Right cardiac atrium (tissue), 5 donors: ENCODE measurements at regions of chr7 and their contacts with region 1.

Region 1: DNA sequence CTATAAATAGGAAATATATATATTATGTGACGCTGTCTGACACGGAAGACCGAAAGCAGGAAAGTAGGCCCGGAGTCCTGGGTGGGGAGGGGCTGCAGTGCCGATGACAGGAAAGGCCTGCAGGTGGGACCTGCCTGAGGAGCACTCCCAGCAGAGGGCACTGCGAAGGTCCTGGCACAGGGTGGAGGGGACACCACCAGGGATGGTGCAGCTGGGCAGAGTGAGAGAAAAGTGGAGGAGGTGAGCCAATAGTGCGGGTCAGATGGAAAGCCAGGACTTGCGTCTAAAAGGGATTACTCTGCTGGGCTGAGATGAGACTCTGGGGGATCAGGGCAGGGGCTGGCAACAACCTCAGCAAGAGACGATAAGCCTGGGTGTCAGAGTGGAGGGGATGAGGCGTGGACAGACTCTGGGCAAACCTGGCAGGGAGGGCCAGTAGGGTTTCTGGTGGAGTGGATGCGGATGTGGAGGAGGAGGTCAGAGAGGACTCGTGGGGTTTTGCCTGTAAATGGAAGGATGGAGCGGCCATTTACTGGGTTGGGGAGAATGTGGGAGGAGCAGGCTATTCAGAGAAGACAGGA is 118.2 kb upstream of the ZNF746 start:
- DNase-seq: peak; percentile 30 to 72 (median 68)
- ATAC-seq: peak; percentile 74 to 77
- H3K4me3 ChIP-seq: no peak overlapping the region
- H3K27ac ChIP-seq: peak overlapping the region; percentile 25
- H3K4me1 ChIP-seq: peaks cover 6% of the 10 kb centered on the region
- H3K27me3 ChIP-seq: no peaks in the 10 kb centered on the region

Region 2: GRCh38 chr7:149500910-149501309 is 114.9 kb before region 1 on chr7:
- intact Hi-C with region 1: loop called in 1 of 4 experiments (anchors 10 kb)
- DNase-seq: peak in 2 of 3 donors; percentile 64 to 72
- ATAC-seq: no peak
- H3K4me3 ChIP-seq: no peak overlapping the region
- H3K27ac ChIP-seq: no peak overlapping the region
- H3K4me1 ChIP-seq: no peaks in the 10 kb centered on the region
- H3K27me3 ChIP-seq: no peaks in the 10 kb centered on the region

Region 3: GRCh38 chr7:149669121-149669818 is 53.5 kb after region 1 on chr7:
- intact Hi-C with region 1: no loop called
- DNase-seq: no peak
- ATAC-seq: no peak
- H3K4me3 ChIP-seq: no peak overlapping the region
- H3K27ac ChIP-seq: no peak overlapping the region
- H3K4me1 ChIP-seq: no peaks in the 10 kb centered on the region
- H3K27me3 ChIP-seq: no peaks in the 10 kb centered on the region

Region 4: GRCh38 chr7:149822353-149822943 is 206.7 kb after region 1 on chr7:
- intact Hi-C with region 1: no loop called
- DNase-seq: peak in 2 of 3 donors; percentile 32 to 46
- ATAC-seq: no peak
- H3K4me3 ChIP-seq: no peak overlapping the region
- H3K27ac ChIP-seq: no peak overlapping the region
- H3K4me1 ChIP-seq: no peaks in the 10 kb centered on the region
- H3K27me3 ChIP-seq: no peaks in the 10 kb centered on the region